HEK293 (cell line): ENCODE measurements at regions of chr4 and their contacts with region 1.

Region 1: DNA sequence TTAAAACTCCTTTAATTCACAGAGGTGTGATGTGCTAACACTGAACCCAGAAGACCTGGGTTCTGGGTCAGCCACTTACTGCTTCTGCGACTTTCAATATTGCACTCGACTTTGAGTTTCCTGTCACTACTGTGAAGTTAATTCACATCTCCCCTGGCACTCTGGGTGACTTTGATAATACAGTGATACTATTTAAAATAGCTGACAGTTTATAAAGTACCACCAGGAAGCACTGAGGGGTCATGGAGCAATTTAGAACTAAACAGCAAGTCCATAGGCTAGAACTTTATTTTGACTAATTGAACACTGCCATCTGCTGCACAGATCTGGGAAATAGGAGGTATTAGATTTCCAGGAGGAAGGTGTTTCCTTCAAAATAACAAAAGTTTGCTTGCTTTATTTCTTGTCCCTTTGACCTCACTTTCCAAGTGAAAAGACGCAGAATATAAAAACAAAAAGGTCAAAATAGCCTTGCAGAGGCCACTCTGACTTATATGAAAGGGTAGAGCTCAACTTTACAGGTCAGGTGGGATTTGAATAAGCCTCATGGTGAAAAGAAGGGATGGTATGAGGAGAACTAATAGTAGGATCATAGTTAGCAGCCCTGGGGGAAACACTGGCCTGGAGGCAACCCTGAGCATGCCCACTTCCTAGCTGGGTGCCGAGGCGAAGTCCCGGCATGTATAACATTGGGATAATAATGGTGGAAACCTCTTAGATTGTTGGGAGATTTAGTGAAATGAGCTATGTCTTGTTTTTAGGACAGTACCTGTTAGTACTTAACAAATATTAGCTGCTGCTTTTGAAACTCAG is 53.4 kb downstream of the ZNF518B start:
- H3K4me3 ChIP-seq: no peak overlapping the region
- H3K27ac ChIP-seq: no peak overlapping the region
- H3K4me1 ChIP-seq: no peaks in the 10 kb centered on the region
- CTCF ChIP-seq: no peak

Region 2: GRCh38 chr4:10157478-10158332 is 246.1 kb before region 1 on chr4:
- CTCF ChIA-PET with region 1: interaction called, 23 read pairs
- POLR2A ChIA-PET with region 1: no interaction called
- H3K4me3 ChIP-seq: no peak overlapping the region
- H3K27ac ChIP-seq: no peak overlapping the region
- H3K4me1 ChIP-seq: no peaks in the 10 kb centered on the region
- CTCF ChIP-seq: no peak

Region 3: GRCh38 chr4:10164877-10165283 is 239.0 kb before region 1 on chr4:
- CTCF ChIA-PET with region 1: interaction called, 31 read pairs
- POLR2A ChIA-PET with region 1: no interaction called
- H3K4me3 ChIP-seq: no peak overlapping the region
- H3K27ac ChIP-seq: no peak overlapping the region
- H3K4me1 ChIP-seq: no peaks in the 10 kb centered on the region
- CTCF ChIP-seq: no peak

Region 4: DNA sequence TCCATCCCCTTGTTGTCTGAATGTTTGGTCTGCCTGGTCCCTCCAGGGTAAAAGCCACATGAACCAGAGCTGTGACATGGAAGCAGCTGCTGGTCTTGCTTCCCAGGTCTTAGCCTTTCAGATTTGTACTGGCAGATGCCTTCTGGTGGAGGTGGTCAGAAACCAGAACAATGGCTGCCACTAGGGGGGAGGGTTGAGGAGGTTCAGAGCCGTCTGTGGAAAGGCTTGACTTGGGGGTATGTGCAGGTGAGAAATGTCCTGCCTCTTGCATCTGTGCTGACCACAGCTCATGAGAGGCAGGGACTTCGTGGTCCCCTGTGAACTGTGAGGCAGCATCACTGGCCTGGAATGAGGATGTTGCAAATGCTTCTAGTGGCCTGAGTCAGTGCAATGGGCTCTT is 143.1 kb before region 1 on chr4:
- CTCF ChIA-PET with region 1: no interaction called
- POLR2A ChIA-PET with region 1: no interaction called
- H3K4me3 ChIP-seq: no peak overlapping the region
- H3K27ac ChIP-seq: no peak overlapping the region
- H3K4me1 ChIP-seq: no peaks in the 10 kb centered on the region
- CTCF ChIP-seq: no peak

Region 5: GRCh38 chr4:10490996-10491395 is 87.2 kb after region 1 on chr4:
- CTCF ChIA-PET with region 1: no interaction called
- POLR2A ChIA-PET with region 1: no interaction called
- H3K4me3 ChIP-seq: no peak overlapping the region
- H3K27ac ChIP-seq: no peak overlapping the region
- H3K4me1 ChIP-seq: no peaks in the 10 kb centered on the region
- CTCF ChIP-seq: no peak